ENCODE measurements at regions of chr13 and their contacts with region 1.

Region 1: GRCh38 chr13:20495082-20496023 is 30.3 kb downstream of the CRYL1 start:
- DNase-seq: peak; percentile 73 to 84
- H3K4me3 ChIP-seq: no peak overlapping the region
- CTCF ChIP-seq: peak in 1 of 3 donors; percentile 84
- POLR2A ChIP-seq: no peak

Region 2: DNA sequence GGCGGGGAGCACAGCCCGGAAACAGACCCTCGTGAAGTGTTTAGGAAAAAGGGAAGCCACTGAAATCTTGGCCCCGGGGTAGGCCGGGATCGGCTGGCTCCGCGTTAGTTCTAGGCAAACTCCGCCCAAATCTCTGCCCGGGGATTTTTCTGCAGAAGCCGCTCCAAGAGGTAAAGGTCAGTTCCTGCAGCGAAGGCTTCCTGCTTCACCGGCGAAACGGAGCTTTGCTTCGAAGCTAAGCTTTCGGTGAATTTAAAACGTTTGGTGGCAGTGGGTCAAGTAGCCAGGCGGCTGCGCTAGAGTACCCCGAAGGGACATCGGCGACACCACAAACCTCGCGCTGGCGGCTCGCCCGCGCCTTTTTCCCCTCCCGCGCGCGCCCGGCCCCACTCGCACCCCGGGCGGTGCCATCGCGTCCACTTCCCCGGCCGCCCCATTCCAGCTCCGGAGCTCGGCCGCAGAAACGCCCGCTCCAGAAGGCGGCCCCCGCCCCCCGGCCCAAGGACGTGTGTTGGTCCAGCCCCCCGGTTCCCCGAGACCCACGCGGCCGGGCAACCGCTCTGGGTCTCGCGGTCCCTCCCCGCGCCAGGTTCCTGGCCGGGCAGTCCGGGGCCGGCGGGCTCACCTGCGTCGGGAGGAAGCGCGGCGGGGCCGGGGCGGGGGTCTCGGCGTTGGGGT is 303.1 kb before region 1 on chr13:
- intact Hi-C with region 1: loop called (anchors 5 kb)
- DNase-seq: peak in 1 of 2 donors; percentile 79
- H3K4me3 ChIP-seq: peak overlapping the region; percentile 40
- CTCF ChIP-seq: no peak
- POLR2A ChIP-seq: no peak

Region 3: DNA sequence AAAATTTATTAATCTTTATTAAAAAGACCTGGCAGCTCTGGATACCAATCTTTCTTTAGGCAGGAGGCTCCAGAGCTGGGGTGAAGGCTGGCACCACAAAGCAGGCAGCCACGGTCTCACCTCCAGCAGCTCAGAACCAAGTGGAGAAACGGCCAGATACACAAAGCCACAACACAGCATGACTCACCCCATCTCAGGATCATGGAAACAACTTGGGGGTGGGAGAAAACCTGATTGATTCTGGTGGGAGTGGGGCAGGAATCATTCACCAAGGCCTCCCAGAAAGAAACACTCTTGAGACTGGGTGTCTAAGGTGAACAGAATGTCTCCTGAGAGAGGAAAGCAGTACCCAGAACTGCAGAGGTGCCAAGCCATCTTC is 33.9 kb before region 1 on chr13:
- intact Hi-C with region 1: no loop called
- DNase-seq: no peak
- H3K4me3 ChIP-seq: no peak overlapping the region
- CTCF ChIP-seq: no peak
- POLR2A ChIP-seq: no peak

Region 4: DNA sequence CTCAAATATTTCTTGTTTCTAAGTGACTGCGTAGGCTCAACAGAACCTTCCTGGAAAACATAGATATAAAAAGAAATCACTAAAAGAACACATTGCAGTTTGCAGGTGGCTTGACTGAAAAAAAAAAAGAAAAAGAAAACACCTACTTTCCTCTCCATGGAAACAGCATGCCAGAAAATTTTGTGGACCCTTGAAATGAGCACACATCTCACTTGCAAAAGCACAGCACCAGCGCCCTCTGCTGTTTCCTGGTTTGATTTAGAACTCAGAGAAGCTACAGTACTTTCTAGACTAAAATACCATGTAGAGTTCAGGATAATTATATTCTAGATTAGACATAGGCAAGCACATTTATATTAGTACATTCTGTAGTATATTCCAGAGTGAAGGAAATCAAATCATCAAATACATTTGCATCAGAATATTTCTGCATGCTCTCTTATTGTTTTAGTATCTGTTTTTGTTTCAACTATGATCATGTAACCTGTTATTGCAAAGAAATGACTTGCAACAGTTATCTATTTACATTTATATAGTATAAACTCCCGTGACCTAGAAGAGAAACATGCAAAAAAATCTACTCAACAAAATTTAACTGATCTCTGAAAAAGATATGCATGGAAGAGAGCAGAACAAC is 429.5 kb after region 1 on chr13:
- intact Hi-C with region 1: loop called (anchors 10 kb)
- DNase-seq: peak; percentile 75 to 90
- H3K4me3 ChIP-seq: no peak overlapping the region
- CTCF ChIP-seq: no peak
- POLR2A ChIP-seq: no peak

Measured in lower leg skin (tissue), 4 donors.